Dendritic cell treated with granulocyte-macrophage colony-stimulating factor and Interleukin-4, amounts not matched to agents 40 ng/mL and 50 ng/mL, for 4 days (primary cell): ENCODE measurements at regions of chr18 and their contacts with region 1.

Region 1: DNA sequence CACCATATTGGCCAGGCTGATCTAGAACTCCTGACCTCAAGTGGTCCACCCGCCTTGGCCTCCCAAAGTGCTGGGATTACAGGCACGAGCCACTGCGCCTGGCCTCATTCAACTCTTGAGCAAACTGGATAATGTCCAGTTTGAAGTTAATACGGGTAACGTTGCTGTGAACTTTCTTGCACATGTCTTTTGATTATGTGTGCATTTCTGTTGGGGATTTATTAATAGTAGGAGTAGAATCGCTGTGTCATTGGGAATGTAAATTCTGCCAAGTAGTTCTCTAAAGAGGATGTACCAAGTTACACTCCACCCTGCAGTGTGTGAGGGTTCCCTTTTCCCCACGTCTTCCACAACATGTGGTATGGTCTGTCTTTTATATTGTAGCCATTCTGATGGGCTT is 6.2 kb downstream of the IMPA2 start:
- H3K4me3 Mint-ChIP-seq: peak overlapping the region; percentile 43
- H3K27ac Mint-ChIP-seq: peak overlapping the region; percentile 76
- H3K4me1 Mint-ChIP-seq: peaks cover 76% of the 10 kb centered on the region
- H3K27me3 Mint-ChIP-seq: no peaks in the 10 kb centered on the region

Region 2: GRCh38 chr18:11908182-11909060 is 79.1 kb before region 1 on chr18 and contains the start of gene MPPE1:
- intact Hi-C with region 1: loop called (anchors 2 kb)
- H3K4me3 Mint-ChIP-seq: peak within 1 kb of the TSS; percentile 89
- H3K27ac Mint-ChIP-seq: peak within 1 kb of the TSS; percentile 97
- H3K4me1 Mint-ChIP-seq: peaks cover 22% of the 10 kb centered on the region
- H3K27me3 Mint-ChIP-seq: no peaks in the 10 kb centered on the region